Left lung (tissue), 14 donors: ENCODE measurements at regions of chr2 and their contacts with region 1.

Region 1: GRCh38 chr2:160994141-160995002 is 165.9 kb upstream of the TANK start:
- DNase-seq: peak in 3 of 4 donors; percentile 58 to 85 (median 81)
- ATAC-seq: peak; percentile 99
- H3K4me3 ChIP-seq: no peak overlapping the region
- H3K27ac ChIP-seq: peak overlapping the region in 1 of 2 donors; percentile 15
- H3K4me1 ChIP-seq: peaks cover 5 to 11% of the 10 kb centered on the region in 2 donors
- H3K27me3 ChIP-seq: no peaks in the 10 kb centered on the region
- CTCF ChIP-seq: peak; percentile 79 to 85

Region 2: DNA sequence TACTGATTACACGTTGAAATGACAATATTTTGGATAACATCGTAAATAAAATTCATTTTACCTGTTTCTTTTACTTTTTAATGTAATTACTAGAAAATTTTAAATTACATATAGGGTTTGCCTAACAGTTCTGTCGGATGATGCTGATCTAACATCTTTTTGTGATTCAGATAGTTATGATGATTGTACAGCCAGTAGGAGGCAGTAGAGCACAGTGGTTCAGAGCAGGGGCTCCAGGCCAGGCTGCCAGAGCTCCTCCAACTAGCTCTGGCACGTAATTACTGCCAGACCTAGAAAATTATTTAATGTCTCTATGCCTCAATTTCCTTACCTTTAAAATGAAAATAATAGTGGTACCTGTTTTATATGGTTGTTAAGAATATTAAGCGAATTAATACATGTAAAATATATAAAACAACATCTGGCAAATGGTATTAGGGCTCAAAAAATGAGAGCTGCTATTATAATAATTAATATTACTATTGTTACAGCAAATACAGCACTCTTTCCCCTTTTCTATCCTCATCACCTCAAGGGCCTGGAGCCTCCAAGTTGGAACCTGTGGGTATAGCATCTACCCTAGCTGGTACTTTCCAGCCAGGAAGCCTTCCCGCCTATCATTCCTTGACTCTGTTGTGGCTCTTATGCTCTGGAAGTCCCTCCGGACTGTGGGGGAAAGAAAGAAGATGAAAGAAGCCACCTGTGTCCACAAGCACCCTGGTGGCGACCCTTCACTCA is 884.3 kb before region 1 on chr2:
- intact Hi-C with region 1: loop called in 1 of 2 experiments (anchors 5 kb)
- DNase-seq: peak in 3 of 4 donors; percentile 40 to 85 (median 61)
- ATAC-seq: peak; percentile 96
- H3K4me3 ChIP-seq: no peak overlapping the region
- H3K27ac ChIP-seq: no peak overlapping the region
- H3K4me1 ChIP-seq: no peaks in the 10 kb centered on the region
- H3K27me3 ChIP-seq: no peaks in the 10 kb centered on the region
- CTCF ChIP-seq: peak; percentile 56 to 67

Region 3: DNA sequence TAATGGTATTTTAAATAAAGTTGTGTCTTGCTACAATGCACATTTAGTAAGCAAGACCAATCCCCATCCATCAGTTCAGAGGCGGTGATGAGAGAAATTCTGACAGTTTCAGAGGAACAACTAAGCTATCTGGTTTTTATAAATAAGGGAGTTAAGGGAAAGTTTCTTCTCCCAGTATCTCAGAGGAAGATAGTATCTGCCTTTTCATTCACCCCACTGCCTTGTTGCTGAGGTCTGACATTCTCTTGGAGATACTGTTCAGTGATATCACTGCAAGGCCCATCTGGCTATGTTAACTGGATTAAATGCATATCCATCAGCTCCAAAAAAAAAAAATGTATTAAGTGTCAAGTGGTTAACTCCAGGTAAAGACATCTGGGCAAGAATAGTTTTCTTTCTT is 548.7 kb before region 1 on chr2:
- intact Hi-C with region 1: no loop called
- DNase-seq: no peak
- ATAC-seq: no peak
- H3K4me3 ChIP-seq: no peak overlapping the region
- H3K27ac ChIP-seq: no peak overlapping the region
- H3K4me1 ChIP-seq: peaks cover 0 to 9% of the 10 kb centered on the region in 2 donors
- H3K27me3 ChIP-seq: no peaks in the 10 kb centered on the region
- CTCF ChIP-seq: no peak

Region 4: GRCh38 chr2:160836755-160837154 is 157.6 kb before region 1 on chr2:
- intact Hi-C with region 1: no loop called
- DNase-seq: no peak
- ATAC-seq: peak; percentile 30
- H3K4me3 ChIP-seq: no peak overlapping the region
- H3K27ac ChIP-seq: no peak overlapping the region
- H3K4me1 ChIP-seq: no peaks in the 10 kb centered on the region
- H3K27me3 ChIP-seq: no peaks in the 10 kb centered on the region
- CTCF ChIP-seq: no peak

Region 5: DNA sequence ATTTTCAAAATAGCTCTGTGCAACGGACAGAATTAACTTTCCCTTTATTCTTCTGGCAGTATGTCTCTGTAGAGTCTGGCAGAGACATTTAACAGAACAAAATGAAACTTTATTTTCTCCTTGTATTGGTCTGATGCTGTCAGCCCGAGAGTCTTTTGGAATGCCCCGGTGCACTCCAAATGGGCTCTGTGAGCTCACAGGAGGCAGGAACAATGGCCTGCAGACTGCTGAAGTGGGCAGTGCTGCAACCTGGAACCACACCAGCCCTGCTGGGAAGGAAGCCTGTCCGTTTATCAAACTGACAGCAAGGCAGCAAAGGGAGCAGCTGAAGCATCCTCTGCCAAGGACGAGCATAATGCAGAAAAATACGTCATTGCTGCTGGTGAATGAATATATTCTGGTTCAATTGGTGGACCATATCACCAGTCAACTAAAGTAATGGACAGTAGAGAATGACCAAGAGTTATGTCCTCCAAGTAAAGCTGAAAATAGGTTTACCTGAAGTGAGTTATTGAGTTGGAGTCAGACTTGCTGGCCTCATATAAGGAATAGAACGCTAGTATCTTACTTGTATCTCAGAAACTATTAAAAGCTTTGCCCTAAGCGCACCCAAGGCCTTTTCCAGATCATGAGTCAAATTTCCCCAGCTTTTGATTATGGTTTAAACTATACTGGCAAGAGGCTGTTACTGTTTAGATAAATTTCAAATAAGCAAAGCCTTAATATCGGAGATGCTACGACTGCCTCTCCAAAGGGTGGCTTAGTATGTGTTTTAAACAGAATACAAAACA is 41.7 kb before region 1 on chr2:
- intact Hi-C with region 1: no loop called
- DNase-seq: peak in 1 of 4 donors; percentile 36
- ATAC-seq: peak; percentile 54
- H3K4me3 ChIP-seq: no peak overlapping the region
- H3K27ac ChIP-seq: peak overlapping the region; percentile 62 to 64
- H3K4me1 ChIP-seq: peaks cover 0 to 5% of the 10 kb centered on the region in 2 donors
- H3K27me3 ChIP-seq: no peaks in the 10 kb centered on the region
- CTCF ChIP-seq: no peak

Region 6: DNA sequence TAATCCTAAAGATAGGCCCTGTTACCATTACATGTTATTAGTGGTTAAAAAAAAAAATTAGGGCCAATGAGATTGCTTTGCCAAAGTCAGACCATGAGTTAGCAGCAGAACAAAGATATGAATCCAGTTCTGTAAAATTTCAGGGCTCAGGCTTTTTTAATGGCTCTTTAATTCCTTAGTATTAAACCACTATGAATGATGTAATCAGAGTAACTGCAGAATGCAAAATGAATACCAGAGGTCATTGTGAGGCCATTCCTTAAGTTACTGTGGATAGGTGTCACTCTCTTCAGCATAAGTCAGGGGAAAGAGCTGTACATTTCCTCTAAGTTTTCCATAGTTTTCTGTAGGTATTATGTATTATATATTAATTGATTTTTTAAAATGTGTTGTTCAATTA is 379.6 kb after region 1 on chr2:
- intact Hi-C with region 1: no loop called
- DNase-seq: no peak
- ATAC-seq: no peak
- H3K4me3 ChIP-seq: no peak overlapping the region
- H3K27ac ChIP-seq: no peak overlapping the region
- H3K4me1 ChIP-seq: no peaks in the 10 kb centered on the region
- H3K27me3 ChIP-seq: no peaks in the 10 kb centered on the region
- CTCF ChIP-seq: no peak